AG04450 (cell line): ENCODE measurements at regions of chr4 and their contacts with region 1.

Region 1: DNA sequence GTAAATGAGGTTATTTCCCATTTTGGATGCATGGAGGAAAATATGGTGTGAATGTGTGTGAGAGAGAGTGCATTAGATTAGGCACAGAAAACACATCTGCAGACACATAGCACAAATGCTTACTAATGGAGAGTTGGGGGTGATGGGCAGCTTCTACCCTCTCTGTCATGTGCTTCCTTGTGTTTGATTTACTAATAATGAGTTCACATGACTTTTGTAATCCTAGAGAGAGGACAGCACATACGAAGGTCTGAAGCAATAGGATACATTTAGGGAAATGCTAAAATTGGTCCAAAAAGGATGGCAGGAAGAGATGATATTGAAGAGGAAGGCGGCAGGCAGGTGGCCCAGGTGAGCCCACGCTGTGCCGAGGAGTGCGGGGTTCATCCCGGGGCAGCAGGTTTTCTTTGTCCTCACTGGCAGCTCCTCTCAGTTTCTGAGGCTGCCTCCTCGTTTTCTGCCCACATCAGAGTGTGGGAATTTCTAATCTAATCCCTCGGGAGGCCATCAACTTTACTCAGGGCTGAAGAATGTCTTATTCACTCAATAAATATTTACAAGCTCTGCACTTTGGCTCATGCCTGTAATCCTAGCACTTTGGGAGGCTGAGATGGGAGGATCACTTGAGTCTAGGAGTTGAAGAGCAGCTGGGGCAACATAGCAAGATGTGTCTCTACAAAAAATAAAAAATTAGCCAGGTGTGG is 15.9 kb upstream of the MAP9 start:
- DNase-seq: peak; percentile 38
- H3K4me3 ChIP-seq: no peak overlapping the region
- H3K27ac ChIP-seq: peak overlapping the region; percentile 96
- H3K27me3 ChIP-seq: peaks cover 2% of the 10 kb centered on the region
- CTCF ChIP-seq: no peak

Region 2: GRCh38 chr4:155353923-155354540 is 38.6 kb before region 1 on chr4:
- CTCF ChIA-PET with region 1: no interaction called
- POLR2A ChIA-PET with region 1: no interaction called
- DNase-seq: no peak
- H3K4me3 ChIP-seq: no peak overlapping the region
- H3K27ac ChIP-seq: no peak overlapping the region
- H3K27me3 ChIP-seq: no peaks in the 10 kb centered on the region
- CTCF ChIP-seq: peak; percentile 89

Region 3: DNA sequence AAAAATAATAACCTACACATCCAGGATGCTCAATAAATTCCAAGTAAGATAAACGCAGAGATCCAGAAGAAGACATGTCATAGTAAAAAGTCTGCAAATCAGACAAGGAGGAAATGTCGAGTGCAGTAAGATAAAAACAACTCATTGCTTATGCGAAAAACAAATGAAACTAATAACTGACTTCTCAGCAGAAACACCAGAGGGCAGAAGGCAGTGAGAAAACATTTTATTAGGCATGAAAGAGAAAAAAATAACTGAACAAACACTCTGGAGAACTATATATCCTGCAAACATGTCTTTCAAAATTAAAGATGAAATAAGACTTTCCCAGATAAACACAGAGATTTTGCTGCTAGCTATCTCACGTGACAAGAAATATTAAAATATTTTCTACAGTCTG is 762.3 kb after region 1 on chr4:
- CTCF ChIA-PET with region 1: interaction called, 10 read pairs
- POLR2A ChIA-PET with region 1: no interaction called
- DNase-seq: no peak
- H3K4me3 ChIP-seq: no peak overlapping the region
- H3K27ac ChIP-seq: no peak overlapping the region
- H3K27me3 ChIP-seq: no peaks in the 10 kb centered on the region
- CTCF ChIP-seq: peak; percentile 33; the same call in 1 of the 2 replicates